PC-9 (cell line): ENCODE measurements at regions of chr2 and their contacts with region 1.

Region 1: GRCh38 chr2:20568501-20569463 is 82.1 kb downstream of the HS1BP3 start:
- DNase-seq: peak; percentile 48 to 66
- H3K4me3 ChIP-seq: no peak overlapping the region
- H3K27ac ChIP-seq: peak overlapping the region; percentile 46
- H3K4me1 ChIP-seq: peaks cover 19% of the 10 kb centered on the region
- H3K27me3 ChIP-seq: no peaks in the 10 kb centered on the region
- CTCF ChIP-seq: no peak

Region 2: DNA sequence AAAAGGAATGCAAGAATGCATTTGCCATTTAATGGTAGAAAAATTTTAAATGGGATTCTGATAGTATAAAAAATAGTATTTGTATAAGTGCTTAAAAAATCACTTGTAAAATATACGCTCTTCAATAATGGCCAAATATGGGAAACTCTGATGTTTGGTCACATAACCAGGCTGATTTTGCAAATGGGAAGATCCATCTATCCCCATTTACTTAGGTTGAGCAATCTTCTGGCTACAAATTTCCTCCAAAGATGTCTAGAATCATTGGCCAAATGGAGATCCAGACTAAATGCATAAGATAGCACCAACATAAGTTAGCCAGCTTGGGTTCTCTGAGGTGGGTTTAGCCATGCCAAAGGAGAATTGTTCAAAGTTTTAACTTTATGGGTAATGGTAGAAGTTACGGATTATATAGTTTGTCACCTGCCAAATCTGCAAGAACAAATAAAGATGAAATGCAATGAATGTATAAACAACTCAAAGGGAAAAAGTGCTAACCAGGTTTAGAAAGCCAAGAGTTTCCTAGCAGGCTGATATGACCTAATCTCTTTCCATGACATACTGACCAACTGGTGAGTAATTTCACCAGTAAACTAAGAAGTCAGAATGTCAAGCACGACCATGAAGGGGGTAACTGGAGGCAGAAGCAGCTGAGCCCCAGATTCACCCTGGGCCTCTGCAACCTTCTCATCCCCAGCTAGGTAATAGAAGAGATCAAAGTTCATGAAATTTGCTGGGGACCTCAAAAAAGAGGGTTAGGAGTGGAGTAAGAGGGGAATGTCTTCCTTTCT is 112.0 kb before region 1 on chr2:
- CTCF ChIA-PET with region 1: no interaction called
- POLR2A ChIA-PET with region 1: interaction called, 11 read pairs
- intact Hi-C with region 1: no loop called
- DNase-seq: no peak
- H3K4me3 ChIP-seq: no peak overlapping the region
- H3K27ac ChIP-seq: no peak overlapping the region
- H3K4me1 ChIP-seq: peaks cover 17% of the 10 kb centered on the region
- H3K27me3 ChIP-seq: no peaks in the 10 kb centered on the region
- CTCF ChIP-seq: no peak